ENCODE measurements at regions of chr16 and their contacts with region 1.

Region 1: DNA sequence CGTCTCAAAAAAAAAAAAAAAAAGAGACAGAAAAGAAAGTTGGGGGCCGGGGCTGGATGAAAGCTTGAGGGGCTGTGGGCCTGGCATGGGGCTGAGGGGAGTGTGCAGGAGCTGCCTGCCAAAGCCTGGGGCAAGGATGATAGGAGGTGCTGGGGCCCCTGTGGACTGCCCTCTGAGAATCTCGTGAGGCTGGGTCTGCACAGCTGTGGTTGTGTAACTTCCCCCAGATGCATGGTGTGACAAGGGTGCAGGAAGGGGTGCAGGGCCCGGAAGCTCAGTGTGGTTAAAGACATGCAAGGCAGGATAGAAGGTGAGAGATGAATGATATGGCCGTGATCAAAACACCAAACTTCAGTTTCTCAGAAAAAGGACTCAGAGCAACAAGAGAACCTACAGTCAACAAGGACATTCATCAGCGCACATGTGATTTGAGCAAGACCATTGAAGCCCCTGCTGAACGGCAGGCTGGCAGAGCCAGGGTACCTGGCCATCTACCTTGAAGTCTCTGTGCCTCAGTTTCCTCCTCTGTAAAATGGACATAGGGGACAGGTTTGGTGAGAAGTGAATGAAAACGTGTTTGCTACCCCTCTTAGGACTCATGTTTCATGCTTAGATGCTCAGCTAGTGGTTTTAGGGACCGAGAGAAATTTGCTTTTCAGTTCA is 9.6 kb downstream of the IL32 start:
- DNase-seq: peak; percentile 58 to 95 (median 82)
- ATAC-seq: peak; percentile 89
- H3K4me3 ChIP-seq: peak overlapping the region; percentile 34
- H3K4me3 Mint-ChIP-seq: peak overlapping the region; percentile 77
- H3K27ac ChIP-seq: peak overlapping the region; percentile 80 to 86
- H3K27ac Mint-ChIP-seq: peak overlapping the region; percentile 95
- H3K4me1 ChIP-seq: peaks cover 96% of the 10 kb centered on the region
- H3K4me1 Mint-ChIP-seq: peaks cover 93% of the 10 kb centered on the region
- H3K27me3 ChIP-seq: no peaks in the 10 kb centered on the region
- H3K27me3 Mint-ChIP-seq: no peaks in the 10 kb centered on the region
- CTCF ChIP-seq: no peak

Region 2: DNA sequence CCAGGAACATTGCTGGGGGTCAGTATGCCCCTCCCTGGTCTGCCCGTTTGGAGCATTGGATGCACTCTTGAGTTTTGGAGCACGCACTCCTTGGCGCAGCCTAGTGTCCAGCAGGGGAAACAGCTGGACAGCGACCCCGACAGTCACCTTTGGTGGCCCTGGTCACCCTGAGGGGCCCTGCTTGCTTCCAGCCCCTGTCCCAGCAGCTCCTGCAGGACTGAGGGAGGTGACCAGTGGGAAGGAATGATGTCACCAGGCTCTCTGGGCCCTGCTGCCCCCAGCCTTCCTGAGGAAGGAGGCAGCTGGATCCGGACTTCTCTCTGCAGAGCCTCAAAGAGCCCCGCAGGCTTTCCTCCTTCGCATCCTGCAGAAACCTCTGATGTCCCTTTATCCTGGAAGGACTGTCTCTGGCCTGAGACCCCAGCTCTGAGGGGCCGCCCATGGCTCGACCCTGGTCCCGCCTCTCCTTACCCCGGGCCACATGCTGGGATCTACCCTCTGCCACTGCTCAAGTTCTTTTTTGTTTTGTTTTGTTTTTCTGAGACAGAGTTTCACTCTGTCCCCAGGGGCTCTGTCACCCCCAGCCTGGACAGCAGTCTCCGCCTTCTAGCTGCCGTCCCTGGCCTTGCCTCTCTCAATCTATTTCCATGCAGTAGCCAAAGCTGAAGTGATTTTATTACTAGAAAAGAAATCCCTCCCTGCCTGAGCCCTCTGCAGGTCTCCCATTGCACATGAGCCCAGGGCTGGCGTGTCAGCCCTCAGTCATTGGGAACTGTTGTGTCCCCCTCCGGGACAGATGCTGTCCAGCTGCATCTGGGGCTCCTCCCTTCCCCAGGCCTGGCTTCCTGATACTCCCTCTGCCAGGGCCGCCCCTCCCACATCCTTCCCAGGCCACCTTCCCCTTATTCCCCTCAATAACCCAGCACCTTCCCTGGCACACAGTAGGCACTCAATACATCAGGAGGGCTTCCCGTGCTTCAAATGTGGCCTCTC is 12.5 kb after region 1 on chr16:
- CTCF ChIA-PET with region 1: no interaction called
- POLR2A ChIA-PET with region 1: interaction called, 35 read pairs
- intact Hi-C with region 1: no loop called
- DNase-seq: no peak
- ATAC-seq: no peak
- H3K4me3 ChIP-seq: peak overlapping the region; percentile 44
- H3K4me3 Mint-ChIP-seq: peak overlapping the region; percentile 42
- H3K27ac ChIP-seq: peak overlapping the region; percentile 10 to 22
- H3K27ac Mint-ChIP-seq: peak overlapping the region; percentile 48
- H3K4me1 ChIP-seq: peaks cover 63% of the 10 kb centered on the region
- H3K4me1 Mint-ChIP-seq: peaks cover 57% of the 10 kb centered on the region
- H3K27me3 ChIP-seq: no peaks in the 10 kb centered on the region
- H3K27me3 Mint-ChIP-seq: no peaks in the 10 kb centered on the region
- CTCF ChIP-seq: no peak

Region 3: GRCh38 chr16:3099732-3100499 is 24.9 kb after region 1 on chr16:
- CTCF ChIA-PET with region 1: interaction called, 7 read pairs
- POLR2A ChIA-PET with region 1: interaction called, 91 read pairs
- intact Hi-C with region 1: loop called in 1 of 2 experiments (anchors 2 kb)
- DNase-seq: peak; percentile 78 to 97 (median 88)
- ATAC-seq: peak; percentile 82
- H3K4me3 ChIP-seq: peak overlapping the region; percentile 48
- H3K4me3 Mint-ChIP-seq: peak overlapping the region; percentile 82
- H3K27ac ChIP-seq: peak overlapping the region in 1 of 2 donors; percentile 18
- H3K27ac Mint-ChIP-seq: peak overlapping the region; percentile 68
- H3K4me1 ChIP-seq: peaks cover 49% of the 10 kb centered on the region
- H3K4me1 Mint-ChIP-seq: peaks cover 71% of the 10 kb centered on the region
- H3K27me3 ChIP-seq: no peaks in the 10 kb centered on the region
- H3K27me3 Mint-ChIP-seq: no peaks in the 10 kb centered on the region
- CTCF ChIP-seq: no peak

Region 4: DNA sequence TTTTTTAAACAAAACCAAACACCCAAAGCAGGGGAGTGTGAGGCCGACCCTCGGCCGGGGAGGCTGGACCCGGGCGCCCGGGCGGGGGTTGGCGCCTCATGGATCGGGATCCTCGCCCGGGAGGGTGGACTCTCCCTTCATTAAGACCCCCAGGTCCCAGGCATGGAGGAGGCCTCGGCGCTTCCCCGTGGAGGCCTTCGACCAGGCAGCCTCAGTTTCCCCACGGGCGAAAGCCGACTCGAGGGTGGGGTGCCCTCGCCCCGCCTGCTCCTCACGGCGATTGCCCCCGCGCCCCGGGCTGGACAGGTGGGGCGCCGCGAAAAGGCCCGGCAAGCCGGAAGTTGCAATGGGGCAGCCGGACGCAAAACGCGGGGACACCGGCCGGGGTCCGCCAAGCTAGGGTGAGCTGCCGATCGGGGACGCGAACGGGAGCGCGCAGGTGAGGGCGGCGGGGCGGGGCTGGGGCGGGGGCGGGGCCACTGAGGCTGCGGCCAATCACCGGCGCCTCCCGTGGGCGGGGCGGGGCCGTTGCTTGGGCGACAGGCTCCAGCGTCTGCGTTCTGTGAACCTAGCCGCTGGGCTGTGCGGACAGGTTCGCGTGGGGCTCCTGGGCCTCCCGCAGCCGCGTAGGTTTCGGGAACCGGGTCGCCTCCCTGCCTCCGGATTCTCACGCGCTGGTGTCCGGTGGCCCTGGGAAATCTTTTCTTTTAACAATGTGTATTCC is 31.4 kb after region 1 on chr16:
- CTCF ChIA-PET with region 1: no interaction called
- POLR2A ChIA-PET with region 1: interaction called, 91 read pairs
- intact Hi-C with region 1: no loop called
- DNase-seq: peak; percentile 79 to 95 (median 87)
- ATAC-seq: peak; percentile 85
- H3K4me3 ChIP-seq: peak overlapping the region; percentile 82
- H3K4me3 Mint-ChIP-seq: peak overlapping the region; percentile 93
- H3K27ac ChIP-seq: peak overlapping the region; percentile 83 to 85
- H3K27ac Mint-ChIP-seq: peak overlapping the region; percentile 76
- H3K4me1 ChIP-seq: peaks cover 27% of the 10 kb centered on the region
- H3K4me1 Mint-ChIP-seq: peaks cover 42% of the 10 kb centered on the region
- H3K27me3 ChIP-seq: no peaks in the 10 kb centered on the region
- H3K27me3 Mint-ChIP-seq: no peaks in the 10 kb centered on the region
- CTCF ChIP-seq: no peak

Region 5: DNA sequence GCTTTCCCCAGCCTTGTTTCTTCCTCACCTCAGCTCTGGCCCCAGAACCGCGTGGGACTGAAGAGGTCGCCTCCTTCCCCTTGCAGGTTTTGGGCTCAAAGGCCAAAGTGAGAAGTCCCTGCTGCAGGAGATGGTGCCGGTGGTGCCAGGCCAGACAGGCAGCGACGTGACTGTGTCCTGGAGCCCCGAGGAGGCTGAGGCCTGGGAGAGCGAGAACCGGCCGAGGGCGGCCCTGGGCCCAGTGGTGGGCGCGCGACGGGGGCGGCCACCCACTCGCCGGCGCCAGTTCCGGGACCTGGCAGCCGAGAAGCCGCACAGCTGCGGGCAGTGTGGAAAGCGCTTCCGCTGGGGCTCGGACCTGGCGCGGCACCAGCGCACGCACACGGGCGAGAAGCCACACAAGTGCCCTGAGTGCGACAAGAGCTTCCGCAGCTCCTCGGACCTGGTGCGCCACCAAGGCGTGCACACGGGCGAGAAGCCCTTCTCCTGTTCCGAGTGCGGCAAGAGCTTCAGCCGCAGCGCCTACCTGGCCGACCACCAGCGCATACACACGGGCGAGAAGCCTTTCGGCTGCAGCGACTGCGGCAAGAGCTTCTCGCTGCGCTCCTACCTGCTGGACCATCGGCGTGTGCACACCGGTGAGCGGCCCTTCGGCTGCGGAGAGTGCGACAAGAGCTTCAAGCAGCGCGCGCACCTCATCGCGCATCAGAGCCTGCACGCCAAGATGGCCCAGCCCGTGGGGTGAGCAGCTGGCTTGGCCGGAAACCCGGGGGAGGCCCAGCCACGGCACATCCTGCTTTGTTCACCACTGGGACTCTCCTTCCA is 65.8 kb after region 1 on chr16:
- CTCF ChIA-PET with region 1: no interaction called
- POLR2A ChIA-PET with region 1: no interaction called
- intact Hi-C with region 1: no loop called
- DNase-seq: peak in 1 of 14 experiments; percentile 29
- ATAC-seq: no peak
- H3K4me3 ChIP-seq: no peak overlapping the region
- H3K4me3 Mint-ChIP-seq: no peak overlapping the region
- H3K27ac ChIP-seq: no peak overlapping the region
- H3K27ac Mint-ChIP-seq: no peak overlapping the region
- H3K4me1 ChIP-seq: peaks cover 3% of the 10 kb centered on the region
- H3K4me1 Mint-ChIP-seq: peaks cover 8% of the 10 kb centered on the region
- H3K27me3 ChIP-seq: no peaks in the 10 kb centered on the region
- H3K27me3 Mint-ChIP-seq: no peaks in the 10 kb centered on the region
- CTCF ChIP-seq: no peak

Region 6: GRCh38 chr16:3180445-3180878 is 105.5 kb after region 1 on chr16:
- CTCF ChIA-PET with region 1: no interaction called
- POLR2A ChIA-PET with region 1: no interaction called
- intact Hi-C with region 1: no loop called
- DNase-seq: no peak
- ATAC-seq: no peak
- H3K4me3 ChIP-seq: no peak overlapping the region
- H3K4me3 Mint-ChIP-seq: no peak overlapping the region
- H3K27ac ChIP-seq: no peak overlapping the region
- H3K27ac Mint-ChIP-seq: no peak overlapping the region
- H3K4me1 ChIP-seq: peaks cover 22% of the 10 kb centered on the region
- H3K4me1 Mint-ChIP-seq: peaks cover 38% of the 10 kb centered on the region
- H3K27me3 ChIP-seq: peaks cover 77 to 85% of the 10 kb centered on the region in 2 experiments
- H3K27me3 Mint-ChIP-seq: peaks cover 93% of the 10 kb centered on the region
- CTCF ChIP-seq: no peak

Measured in CD4-positive, alpha-beta T cell (primary cell).